ENCODE measurements at regions of chr4 and their contacts with region 1.

Region 1: DNA sequence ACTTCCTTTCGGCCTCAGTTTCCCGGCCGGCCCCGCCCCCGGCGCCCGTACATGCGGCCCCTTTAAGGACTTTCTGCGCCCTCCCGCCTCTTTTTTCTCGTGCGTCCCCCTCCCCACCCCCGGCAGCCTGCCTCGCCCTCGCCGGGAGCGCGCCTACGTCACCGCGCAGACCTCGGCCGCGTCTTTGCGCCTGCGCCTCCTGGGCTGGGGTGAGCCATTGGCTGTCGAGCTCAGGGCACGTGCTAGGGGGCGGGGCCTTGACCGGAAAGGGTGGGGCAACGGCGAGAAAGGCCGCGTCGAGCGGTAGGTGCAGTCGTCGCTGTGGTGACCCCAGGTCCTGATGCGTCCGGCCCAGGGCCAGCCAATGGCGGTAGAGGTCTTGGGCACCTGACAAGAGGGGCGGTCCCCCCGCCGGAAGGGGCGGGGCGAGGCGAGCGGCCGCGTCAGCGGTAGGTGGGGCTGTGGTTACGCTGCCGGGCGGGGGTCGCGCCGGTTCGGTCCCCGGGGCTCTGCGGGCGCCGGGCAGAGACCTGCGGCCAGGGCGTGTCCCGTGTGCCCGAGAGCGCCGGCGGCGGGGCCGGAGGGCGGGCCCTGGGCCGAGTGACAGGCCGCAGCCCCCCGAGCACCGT is at the start of gene UVSSA:
- DNase-seq: peak; percentile 100
- H3K4me3 ChIP-seq: peak within 1 kb of the TSS; percentile 36 to 81
- H3K4me3 Mint-ChIP-seq: peak within 1 kb of the TSS; percentile 91 to 98 (median 95)
- H3K27ac ChIP-seq: peak within 1 kb of the TSS; percentile 83
- H3K27ac Mint-ChIP-seq: peak within 1 kb of the TSS; percentile 91 to 98 (median 95)
- H3K4me1 ChIP-seq: peaks cover 34% of the 10 kb centered on the region
- H3K4me1 Mint-ChIP-seq: peaks cover 25 to 60% (median 29%) of the 10 kb centered on the region in 4 donors
- H3K27me3 ChIP-seq: no peaks in the 10 kb centered on the region
- H3K27me3 Mint-ChIP-seq: no peaks in the 10 kb centered on the region
- total RNA-seq, gene UVSSA: 44.4 to 44.6 TPM

Region 2: GRCh38 chr4:1130316-1131186 is 216.3 kb before region 1 on chr4:
- CTCF ChIA-PET with region 1: interaction called, 48 read pairs
- POLR2A ChIA-PET with region 1: no interaction called
- intact Hi-C with region 1: loop called (anchors 1 kb)
- DNase-seq: peak; percentile 69 to 83 (median 76)
- H3K4me3 ChIP-seq: no peak overlapping the region
- H3K4me3 Mint-ChIP-seq: no peak overlapping the region
- H3K27ac ChIP-seq: no peak overlapping the region
- H3K27ac Mint-ChIP-seq: peak overlapping the region in 1 of 7 donors; percentile 34
- H3K4me1 ChIP-seq: no peaks in the 10 kb centered on the region
- H3K4me1 Mint-ChIP-seq: peaks cover 0 to 4% (median 2%) of the 10 kb centered on the region in 4 donors
- H3K27me3 ChIP-seq: no peaks in the 10 kb centered on the region
- H3K27me3 Mint-ChIP-seq: peaks cover 1 to 10% of the 10 kb centered on the region in 2 donors

Region 3: DNA sequence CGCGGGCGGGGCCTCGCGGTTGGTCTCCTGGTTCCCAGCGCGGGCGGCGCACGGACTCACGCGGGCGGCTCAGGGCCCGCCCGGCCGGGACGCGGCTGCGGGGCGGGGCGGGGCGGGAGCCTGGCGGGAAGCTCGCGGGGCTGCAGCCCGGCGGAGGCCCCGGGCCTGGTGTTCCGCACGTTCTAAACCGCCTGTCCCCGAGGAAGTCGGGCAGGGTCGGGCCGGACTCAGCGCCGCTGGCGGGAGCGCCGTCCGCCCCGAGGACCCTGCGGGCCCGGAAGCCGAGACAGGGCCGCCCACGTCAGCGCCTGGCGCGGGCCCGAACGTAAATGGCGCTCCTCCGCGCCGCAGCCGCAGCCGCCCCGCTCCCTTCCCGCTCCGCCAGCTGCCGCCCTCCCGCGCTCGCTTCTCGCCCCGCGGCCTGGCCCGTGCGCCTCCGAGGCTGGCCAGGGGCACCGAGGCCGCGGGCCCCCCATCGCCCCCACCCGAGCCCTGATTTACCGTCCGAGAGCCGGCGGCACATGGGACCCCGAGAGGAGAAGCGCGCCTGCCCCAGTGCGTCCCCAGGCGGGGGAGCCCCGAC is 97.7 kb before region 1 on chr4:
- CTCF ChIA-PET with region 1: interaction called, 29 read pairs
- POLR2A ChIA-PET with region 1: interaction called, 146 read pairs
- intact Hi-C with region 1: loop called (anchors 1 kb)
- DNase-seq: peak; percentile 77 to 93 (median 90)
- H3K4me3 ChIP-seq: peak overlapping the region; percentile 68 to 73
- H3K4me3 Mint-ChIP-seq: peak overlapping the region; percentile 86 to 92 (median 90)
- H3K27ac ChIP-seq: peak overlapping the region; percentile 88
- H3K27ac Mint-ChIP-seq: peak overlapping the region; percentile 93 to 99 (median 96)
- H3K4me1 ChIP-seq: peaks cover 74% of the 10 kb centered on the region
- H3K4me1 Mint-ChIP-seq: peaks cover 39 to 79% (median 67%) of the 10 kb centered on the region in 4 donors
- H3K27me3 ChIP-seq: no peaks in the 10 kb centered on the region
- H3K27me3 Mint-ChIP-seq: no peaks in the 10 kb centered on the region

Region 4: GRCh38 chr4:1309261-1310010 is 37.5 kb before region 1 on chr4:
- CTCF ChIA-PET with region 1: interaction called, 8 read pairs
- POLR2A ChIA-PET with region 1: interaction called, 21 read pairs
- intact Hi-C with region 1: loop called (anchors 2 kb)
- DNase-seq: peak in 4 of 5 donors; percentile 34 to 72 (median 42)
- H3K4me3 ChIP-seq: peak overlapping the region; percentile 33 to 39
- H3K4me3 Mint-ChIP-seq: peak overlapping the region; percentile 51 to 84 (median 80)
- H3K27ac ChIP-seq: peak overlapping the region; percentile 36
- H3K27ac Mint-ChIP-seq: peak overlapping the region; percentile 61 to 89 (median 83)
- H3K4me1 ChIP-seq: peaks cover 64% of the 10 kb centered on the region
- H3K4me1 Mint-ChIP-seq: peaks cover 48 to 77% (median 62%) of the 10 kb centered on the region in 4 donors
- H3K27me3 ChIP-seq: no peaks in the 10 kb centered on the region
- H3K27me3 Mint-ChIP-seq: no peaks in the 10 kb centered on the region

Region 5: GRCh38 chr4:1604711-1605205 is 257.9 kb after region 1 on chr4:
- CTCF ChIA-PET with region 1: interaction called, 5 read pairs
- POLR2A ChIA-PET with region 1: interaction called, 15 read pairs
- intact Hi-C with region 1: loop called (anchors 2 kb)
- DNase-seq: peak; percentile 63 to 79 (median 74)
- H3K4me3 ChIP-seq: peak overlapping the region; percentile 23 to 31
- H3K4me3 Mint-ChIP-seq: peak overlapping the region; percentile 63 to 81 (median 76)
- H3K27ac ChIP-seq: peak overlapping the region; percentile 21
- H3K27ac Mint-ChIP-seq: peak overlapping the region in 6 of 7 donors; percentile 73 to 96 (median 90)
- H3K4me1 ChIP-seq: peaks cover 36% of the 10 kb centered on the region
- H3K4me1 Mint-ChIP-seq: peaks cover 7 to 30% (median 22%) of the 10 kb centered on the region in 4 donors
- H3K27me3 ChIP-seq: no peaks in the 10 kb centered on the region
- H3K27me3 Mint-ChIP-seq: no peaks in the 10 kb centered on the region

Region 6: GRCh38 chr4:1870578-1871443 is 523.9 kb after region 1 on chr4 and contains the start of gene NSD2:
- CTCF ChIA-PET with region 1: no interaction called
- POLR2A ChIA-PET with region 1: interaction called, 3 read pairs
- intact Hi-C with region 1: loop called (anchors 5 kb)
- DNase-seq: peak; percentile 84 to 89 (median 88)
- H3K4me3 ChIP-seq: peak within 1 kb of the TSS; percentile 47 to 84
- H3K4me3 Mint-ChIP-seq: peak within 1 kb of the TSS; percentile 86 to 97 (median 89)
- H3K27ac ChIP-seq: peak within 1 kb of the TSS; percentile 91
- H3K27ac Mint-ChIP-seq: peak within 1 kb of the TSS; percentile 95 to 99 (median 98)
- H3K4me1 ChIP-seq: peaks cover 36% of the 10 kb centered on the region
- H3K4me1 Mint-ChIP-seq: peaks cover 21 to 39% (median 32%) of the 10 kb centered on the region in 4 donors
- H3K27me3 ChIP-seq: no peaks in the 10 kb centered on the region
- H3K27me3 Mint-ChIP-seq: peaks cover 0 to 3% of the 10 kb centered on the region in 2 donors
- total RNA-seq, gene NSD2: 54.8 to 57.4 TPM

Measured in CD4-positive, alpha-beta memory T cell (primary cell).